ENCODE measurements at regions of chr9 and their contacts with region 1.

Region 1: GRCh38 chr9:106862825-106863720 is at the start of gene ZNF462:
- H3K4me3 ChIP-seq: peak within 1 kb of the TSS; percentile 66
- H3K27ac ChIP-seq: peak within 1 kb of the TSS; percentile 68
- H3K4me1 ChIP-seq: peaks cover 2% of the 10 kb centered on the region; the same call in 1 of the 2 replicates
- CTCF ChIP-seq: peak; percentile 53; the same call in 1 of the 2 replicates

Region 2: GRCh38 chr9:106883626-106884190 is 20.6 kb after region 1 on chr9:
- CTCF ChIA-PET with region 1: interaction called, 4 read pairs
- POLR2A ChIA-PET with region 1: interaction called, 15 read pairs
- H3K4me3 ChIP-seq: no peak overlapping the region
- H3K27ac ChIP-seq: no peak overlapping the region
- H3K4me1 ChIP-seq: peaks cover 9% of the 10 kb centered on the region
- CTCF ChIP-seq: no peak

Region 3: DNA sequence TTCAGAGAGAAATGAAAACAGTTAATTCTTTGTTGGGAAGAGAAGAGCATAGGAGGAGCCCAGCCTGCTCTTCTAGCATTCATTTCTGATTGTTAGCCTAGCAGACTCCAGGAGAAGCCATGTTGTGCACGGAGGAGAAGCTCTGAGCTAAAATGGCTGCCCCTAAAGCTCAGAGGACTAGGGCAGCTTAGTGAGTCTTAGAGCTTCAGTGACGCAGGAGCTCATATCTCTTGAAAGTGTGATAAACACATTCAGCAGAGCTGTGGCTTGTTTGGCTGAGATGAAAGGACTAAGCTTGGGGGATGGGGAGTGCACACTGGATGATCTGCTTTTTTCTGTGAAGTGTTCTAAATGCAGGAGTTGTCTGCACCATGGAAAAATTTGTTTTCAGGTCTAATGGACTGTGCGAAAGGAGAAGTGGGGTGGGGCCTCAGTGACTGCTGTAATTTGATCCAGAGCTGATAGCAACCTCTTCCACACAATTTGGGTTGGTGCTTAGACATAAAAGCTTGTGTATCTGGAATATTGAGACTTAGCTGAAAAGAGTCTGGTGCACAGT is 58.3 kb after region 1 on chr9:
- CTCF ChIA-PET with region 1: interaction called, 5 read pairs
- POLR2A ChIA-PET with region 1: interaction called, 45 read pairs
- H3K4me3 ChIP-seq: peak overlapping the region; percentile 6
- H3K27ac ChIP-seq: peak overlapping the region; percentile 93
- H3K4me1 ChIP-seq: peaks cover 4% of the 10 kb centered on the region
- CTCF ChIP-seq: no peak